Head of caudate nucleus (tissue), 42 donors: ENCODE measurements at regions of chr3 and their contacts with region 1.

Region 1: GRCh38 chr3:122258757-122259371 is 66.2 kb upstream of the CSTA start:
- DNase-seq: peak; percentile 21 to 80 (median 58)

Region 2: GRCh38 chr3:121552379-121552778 is 706.5 kb before region 1 on chr3:
- intact Hi-C with region 1: loop called (anchors 10 kb)
- DNase-seq: peak in 11 of 42 donors; percentile 4 to 51 (median 20)